CD8-positive, alpha-beta T cell (primary cell): ENCODE measurements at regions of chr3 and their contacts with region 1.

Region 1: GRCh38 chr3:156643729-156644389 is 30.5 kb upstream of the TIPARP start:
- DNase-seq: peak in 8 of 9 experiments; percentile 13 to 68 (median 40)
- ATAC-seq: peak; percentile 80
- H3K4me3 ChIP-seq: no peak overlapping the region
- H3K4me3 Mint-ChIP-seq: peak overlapping the region; percentile 62
- H3K27ac ChIP-seq: no peak overlapping the region
- H3K27ac Mint-ChIP-seq: peak overlapping the region; percentile 28
- H3K4me1 ChIP-seq: peaks cover 17% of the 10 kb centered on the region
- H3K4me1 Mint-ChIP-seq: peaks cover 20% of the 10 kb centered on the region
- H3K27me3 ChIP-seq: no peaks in the 10 kb centered on the region
- H3K27me3 Mint-ChIP-seq: no peaks in the 10 kb centered on the region
- CTCF ChIP-seq: no peak

Region 2: DNA sequence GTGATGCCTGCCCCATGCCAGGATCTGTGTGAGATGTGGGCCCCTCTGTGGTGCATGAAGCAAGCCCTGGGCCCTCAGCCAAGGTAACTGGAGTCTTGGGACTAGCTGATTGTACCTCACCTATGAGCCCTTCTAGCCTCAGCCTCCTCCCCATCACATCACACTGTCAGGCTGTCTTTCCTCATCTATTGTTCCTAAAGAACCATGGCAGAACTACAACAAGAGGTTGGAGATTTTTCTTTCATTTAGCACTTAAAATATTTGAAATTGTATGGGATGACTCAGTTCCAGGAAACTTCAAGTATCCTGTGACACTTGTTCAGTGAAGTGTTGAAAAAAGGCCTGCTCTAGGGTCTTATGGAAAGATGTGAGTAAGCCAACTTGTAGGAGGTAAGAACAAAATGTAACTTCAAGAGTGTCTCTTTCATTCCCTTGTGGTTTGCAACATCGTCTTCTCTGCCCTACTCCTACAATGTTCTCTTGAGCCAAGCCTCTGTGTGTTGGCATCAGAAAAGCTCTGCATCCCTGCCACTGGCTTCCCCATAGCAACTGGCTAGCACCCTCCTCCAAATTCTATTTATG is 28.2 kb before region 1 on chr3:
- CTCF ChIA-PET with region 1: no interaction called
- POLR2A ChIA-PET with region 1: no interaction called
- intact Hi-C with region 1: no loop called
- DNase-seq: no peak
- ATAC-seq: no peak
- H3K4me3 ChIP-seq: no peak overlapping the region
- H3K4me3 Mint-ChIP-seq: no peak overlapping the region
- H3K27ac ChIP-seq: no peak overlapping the region
- H3K27ac Mint-ChIP-seq: no peak overlapping the region
- H3K4me1 ChIP-seq: no peaks in the 10 kb centered on the region
- H3K4me1 Mint-ChIP-seq: no peaks in the 10 kb centered on the region
- H3K27me3 ChIP-seq: no peaks in the 10 kb centered on the region
- H3K27me3 Mint-ChIP-seq: no peaks in the 10 kb centered on the region
- CTCF ChIP-seq: no peak

Region 3: GRCh38 chr3:156664831-156665178 is 20.9 kb after region 1 on chr3:
- CTCF ChIA-PET with region 1: interaction called, 3 read pairs
- POLR2A ChIA-PET with region 1: no interaction called
- intact Hi-C with region 1: loop called in 1 of 2 experiments (anchors 2 kb)
- DNase-seq: no peak
- ATAC-seq: peak; percentile 31
- H3K4me3 ChIP-seq: no peak overlapping the region
- H3K4me3 Mint-ChIP-seq: peak overlapping the region; percentile 47
- H3K27ac ChIP-seq: peak overlapping the region in 1 of 2 experiments; percentile 44
- H3K27ac Mint-ChIP-seq: peak overlapping the region; percentile 76
- H3K4me1 ChIP-seq: peaks cover 14% of the 10 kb centered on the region
- H3K4me1 Mint-ChIP-seq: peaks cover 40% of the 10 kb centered on the region
- H3K27me3 ChIP-seq: no peaks in the 10 kb centered on the region
- H3K27me3 Mint-ChIP-seq: no peaks in the 10 kb centered on the region
- CTCF ChIP-seq: no peak